ENCODE measurements at regions of chr12 and their contacts with region 1.

Region 1: DNA sequence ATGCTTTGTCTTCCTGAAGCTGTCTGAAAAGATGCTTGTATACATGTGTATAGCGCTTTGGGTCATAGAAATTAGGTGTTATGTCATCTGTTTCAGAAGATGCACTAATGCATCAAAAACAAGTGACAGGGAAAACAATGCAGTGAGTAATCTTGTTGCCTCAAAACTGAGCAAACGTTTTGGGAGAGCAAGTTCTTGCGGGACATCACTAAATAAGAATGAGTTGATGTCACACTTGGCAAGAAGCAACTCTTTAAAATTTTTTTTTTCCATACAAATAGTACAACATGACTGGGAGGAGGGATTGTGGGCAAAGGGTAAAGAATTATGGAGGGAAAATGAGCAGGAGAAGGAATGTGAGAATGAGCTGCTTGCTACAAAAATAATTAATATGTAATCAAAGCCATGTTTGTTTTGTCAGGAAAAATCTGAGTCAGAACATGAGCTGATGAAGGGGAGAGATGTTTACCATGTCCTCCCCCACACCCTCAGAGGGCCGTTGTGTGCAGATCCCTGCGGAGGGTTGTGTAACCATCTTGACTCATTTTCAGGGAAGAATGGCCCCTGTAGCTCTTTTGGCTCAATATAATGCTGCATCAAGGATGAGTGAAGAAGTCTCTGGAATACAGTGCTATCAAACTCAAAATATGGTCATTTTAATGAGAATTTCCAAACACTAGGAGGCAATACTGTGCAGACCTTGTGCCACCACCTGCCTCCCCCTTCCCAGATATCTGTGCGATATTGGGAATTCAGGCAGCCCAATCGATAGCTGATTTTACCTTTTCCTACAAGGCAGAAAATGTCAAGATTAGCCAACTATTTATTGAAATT is 41.4 kb downstream of the BORCS5 start:
- DNase-seq: peak in 1 of 10 donors; percentile 18

Region 2: DNA sequence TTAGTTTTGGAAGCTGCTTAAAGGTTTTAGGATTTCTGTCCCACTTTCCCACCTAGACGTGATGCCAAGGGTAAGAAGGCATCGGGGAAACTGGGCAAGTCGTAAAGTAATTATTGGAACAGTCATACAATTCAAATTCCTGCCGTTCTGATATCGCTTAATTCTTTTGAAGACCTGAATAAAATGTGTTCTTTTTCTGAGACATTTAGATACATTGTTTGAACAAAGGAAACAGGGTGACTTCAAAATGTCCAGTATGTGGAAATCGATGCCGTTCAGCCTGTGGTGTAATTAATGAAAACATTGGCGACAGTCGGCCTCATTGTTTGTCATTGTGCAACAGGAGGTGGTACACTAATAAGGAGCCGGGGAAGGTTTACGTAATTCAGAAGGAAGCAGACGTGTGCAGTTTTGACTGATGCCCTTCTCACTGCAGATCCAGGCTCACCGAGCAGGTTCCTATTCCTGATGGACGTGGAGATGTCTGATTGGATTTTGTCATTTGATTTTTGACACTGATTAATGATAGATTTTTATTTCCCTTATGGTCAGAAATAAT is 51.3 kb after region 1 on chr12:
- intact Hi-C with region 1: no loop called
- DNase-seq: no peak

Region 3: GRCh38 chr12:12486661-12487240 is 88.5 kb after region 1 on chr12:
- intact Hi-C with region 1: loop called (anchors 10 kb)
- DNase-seq: no peak

Region 4: GRCh38 chr12:12645485-12645884 is 247.2 kb after region 1 on chr12:
- intact Hi-C with region 1: no loop called
- DNase-seq: no peak